Psoas muscle (tissue), 8 donors: ENCODE measurements at regions of chr16 and their contacts with region 1.

Region 1: DNA sequence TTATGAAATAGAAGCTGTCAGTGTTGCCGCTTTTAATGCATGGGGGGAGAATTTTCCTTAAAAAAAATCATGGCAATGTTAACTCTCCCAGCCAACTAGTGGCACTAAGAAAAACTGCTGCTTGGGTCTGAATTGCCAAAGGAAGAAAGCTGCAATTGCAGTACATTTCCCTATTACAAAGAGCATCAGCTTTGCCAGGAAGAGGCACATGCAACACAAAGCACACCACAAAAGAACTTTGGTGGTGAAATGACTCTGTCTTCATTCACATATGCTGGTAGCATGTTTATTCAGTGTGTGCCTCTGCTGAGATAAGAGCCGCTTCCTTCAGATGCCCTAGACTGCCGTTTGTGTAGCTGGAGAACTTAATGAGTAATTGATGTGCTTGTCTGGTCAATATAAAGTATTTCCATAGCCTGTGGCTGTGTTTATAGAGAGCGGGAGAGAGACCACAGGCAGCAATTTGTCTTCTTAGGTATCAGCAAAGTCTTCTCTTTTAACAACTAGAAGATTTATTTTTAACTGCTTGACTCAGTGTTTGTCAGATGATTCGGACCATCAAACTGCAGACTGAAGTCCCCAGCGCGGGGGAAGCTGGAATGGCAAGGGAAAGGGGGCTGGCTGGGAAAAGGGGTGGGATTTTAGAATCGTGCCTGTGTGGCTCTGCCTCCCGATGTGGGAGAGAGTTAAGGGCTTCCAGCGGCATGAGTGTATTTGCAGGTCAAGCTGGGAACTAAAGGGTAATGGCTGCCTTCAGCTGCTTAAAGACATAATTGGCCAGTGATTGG is 115.1 kb downstream of the MRTFB start:
- DNase-seq: peak; percentile 24 to 53
- ATAC-seq: peak; percentile 74 to 87 (median 82)
- H3K4me3 ChIP-seq: peak overlapping the region; percentile 72
- H3K27ac ChIP-seq: peak overlapping the region; percentile 90
- H3K4me1 ChIP-seq: peaks cover 34% of the 10 kb centered on the region
- H3K27me3 ChIP-seq: no peaks in the 10 kb centered on the region
- CTCF ChIP-seq: peak; percentile 45

Region 2: GRCh38 chr16:13262270-13263090 is 923.7 kb before region 1 on chr16:
- intact Hi-C with region 1: no loop called
- DNase-seq: no peak
- ATAC-seq: no peak
- H3K4me3 ChIP-seq: no peak overlapping the region
- H3K27ac ChIP-seq: no peak overlapping the region
- H3K4me1 ChIP-seq: no peaks in the 10 kb centered on the region
- H3K27me3 ChIP-seq: peaks cover 0 to 2% (median 0%) of the 10 kb centered on the region in 3 donors
- CTCF ChIP-seq: no peak

Region 3: GRCh38 chr16:13848795-13849194 is 337.4 kb before region 1 on chr16:
- intact Hi-C with region 1: no loop called
- DNase-seq: no peak
- ATAC-seq: no peak
- H3K4me3 ChIP-seq: no peak overlapping the region
- H3K27ac ChIP-seq: no peak overlapping the region
- H3K4me1 ChIP-seq: no peaks in the 10 kb centered on the region
- H3K27me3 ChIP-seq: no peaks in the 10 kb centered on the region
- CTCF ChIP-seq: no peak

Region 4: GRCh38 chr16:13919683-13920509 is 266.3 kb before region 1 on chr16 and contains the start of gene ERCC4:
- intact Hi-C with region 1: loop called (anchors 5 kb)
- DNase-seq: peak; percentile 100
- ATAC-seq: peak; percentile 96 to 99 (median 98)
- H3K4me3 ChIP-seq: peak within 1 kb of the TSS; percentile 96
- H3K27ac ChIP-seq: peak within 1 kb of the TSS; percentile 90
- H3K4me1 ChIP-seq: peaks cover 25% of the 10 kb centered on the region
- H3K27me3 ChIP-seq: no peaks in the 10 kb centered on the region
- CTCF ChIP-seq: peak; percentile 85
- total RNA-seq, gene ERCC4: 6.8 to 10.8 (median 8.8) TPM

Region 5: GRCh38 chr16:14013571-14014282 is 172.5 kb before region 1 on chr16:
- intact Hi-C with region 1: loop called in 1 of 2 experiments (anchors 2 kb)
- DNase-seq: peak in 1 of 2 donors; percentile 60
- ATAC-seq: peak; percentile 60 to 75 (median 66)
- H3K4me3 ChIP-seq: peak overlapping the region; percentile 39
- H3K27ac ChIP-seq: peak overlapping the region; percentile 77
- H3K4me1 ChIP-seq: peaks cover 41% of the 10 kb centered on the region
- H3K27me3 ChIP-seq: no peaks in the 10 kb centered on the region
- CTCF ChIP-seq: no peak

Region 6: GRCh38 chr16:14028202-14028601 is 158.0 kb before region 1 on chr16:
- intact Hi-C with region 1: loop called in 1 of 2 experiments (anchors 5 kb)
- DNase-seq: no peak
- ATAC-seq: peak; percentile 59 to 93 (median 80)
- H3K4me3 ChIP-seq: no peak overlapping the region
- H3K27ac ChIP-seq: peak overlapping the region; percentile 70
- H3K4me1 ChIP-seq: peaks cover 35% of the 10 kb centered on the region
- H3K27me3 ChIP-seq: no peaks in the 10 kb centered on the region
- CTCF ChIP-seq: no peak

Region 7: GRCh38 chr16:14070877-14071575 is 115.2 kb before region 1 on chr16 and contains the start of gene MRTFB:
- intact Hi-C with region 1: loop called (anchors 5 to 10 kb)
- DNase-seq: peak; percentile 83 to 88
- ATAC-seq: peak; percentile 88 to 95 (median 92)
- H3K4me3 ChIP-seq: peak within 1 kb of the TSS; percentile 79
- H3K27ac ChIP-seq: peak within 1 kb of the TSS; percentile 79
- H3K4me1 ChIP-seq: peaks cover 7% of the 10 kb centered on the region
- H3K27me3 ChIP-seq: no peaks in the 10 kb centered on the region
- CTCF ChIP-seq: no peak
- total RNA-seq, gene MRTFB: 14.1 to 26.3 (median 20.0) TPM

Region 8: DNA sequence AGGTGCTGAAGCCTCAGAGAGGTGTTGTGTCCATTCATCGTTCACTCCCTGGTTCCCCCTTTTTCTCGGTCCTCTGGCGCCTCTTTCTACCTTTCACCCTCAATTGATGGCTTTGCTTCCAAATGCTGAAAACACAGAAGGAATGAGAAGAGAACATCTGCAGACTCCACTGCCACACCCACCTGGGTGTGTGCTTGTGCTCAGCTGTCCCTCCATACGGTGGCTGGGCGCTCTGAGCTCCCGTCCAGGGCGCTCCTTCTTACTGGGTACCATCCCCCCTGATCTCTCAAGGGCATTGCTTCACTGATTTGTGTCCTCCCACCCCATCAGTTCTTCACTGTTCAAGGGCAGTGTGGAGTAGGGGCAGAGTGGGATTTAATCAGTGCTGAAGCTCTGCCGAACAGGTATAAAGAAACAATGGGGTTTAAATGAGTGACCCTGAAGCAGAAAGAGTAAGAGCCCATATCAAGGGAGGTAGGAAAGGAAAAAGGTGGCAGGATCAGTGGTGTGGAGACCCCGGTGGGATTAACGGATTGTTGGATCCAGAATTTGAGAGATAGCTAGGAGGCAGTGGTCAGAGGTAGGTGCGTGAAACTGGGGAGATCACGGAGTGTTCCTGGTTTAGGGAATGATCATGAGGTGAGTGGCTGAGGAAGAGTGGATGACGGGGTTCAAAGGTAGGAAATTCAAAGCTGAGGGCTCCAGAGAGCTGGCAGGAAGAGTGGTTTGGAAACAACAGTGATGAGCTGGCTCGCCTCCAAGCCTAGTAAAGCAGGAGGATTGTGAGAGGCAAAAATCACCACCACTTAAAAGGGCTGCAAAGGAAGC is 74.3 kb before region 1 on chr16:
- intact Hi-C with region 1: loop called in 1 of 2 experiments (anchors 5 kb)
- DNase-seq: peak; percentile 43 to 58
- ATAC-seq: peak in 3 of 4 donors; percentile 2 to 26 (median 7)
- H3K4me3 ChIP-seq: no peak overlapping the region
- H3K27ac ChIP-seq: peak overlapping the region; percentile 76
- H3K4me1 ChIP-seq: peaks cover 78% of the 10 kb centered on the region
- H3K27me3 ChIP-seq: no peaks in the 10 kb centered on the region
- CTCF ChIP-seq: no peak

Region 9: DNA sequence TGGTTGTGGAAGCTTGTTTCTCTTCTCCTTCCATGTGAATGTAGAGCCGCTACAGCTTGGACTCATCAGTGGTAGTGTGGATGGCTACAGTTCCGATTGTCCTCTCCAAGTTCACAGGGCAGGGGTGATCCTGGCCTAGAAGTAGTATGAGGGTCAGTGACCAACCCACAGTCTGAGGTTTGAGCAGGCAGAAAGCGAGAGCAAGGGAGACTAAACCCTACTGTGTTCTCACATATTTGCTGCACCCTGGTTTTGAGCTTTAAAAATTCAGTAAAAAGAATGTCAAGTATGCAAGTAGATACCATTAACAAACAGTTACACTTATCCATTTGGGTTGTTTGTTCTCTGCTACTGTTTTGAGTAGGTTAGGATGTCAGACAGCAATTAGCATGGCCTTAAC is 33.8 kb after region 1 on chr16:
- intact Hi-C with region 1: no loop called
- DNase-seq: no peak
- ATAC-seq: no peak
- H3K4me3 ChIP-seq: no peak overlapping the region
- H3K27ac ChIP-seq: no peak overlapping the region
- H3K4me1 ChIP-seq: no peaks in the 10 kb centered on the region
- H3K27me3 ChIP-seq: no peaks in the 10 kb centered on the region
- CTCF ChIP-seq: no peak

Region 10: DNA sequence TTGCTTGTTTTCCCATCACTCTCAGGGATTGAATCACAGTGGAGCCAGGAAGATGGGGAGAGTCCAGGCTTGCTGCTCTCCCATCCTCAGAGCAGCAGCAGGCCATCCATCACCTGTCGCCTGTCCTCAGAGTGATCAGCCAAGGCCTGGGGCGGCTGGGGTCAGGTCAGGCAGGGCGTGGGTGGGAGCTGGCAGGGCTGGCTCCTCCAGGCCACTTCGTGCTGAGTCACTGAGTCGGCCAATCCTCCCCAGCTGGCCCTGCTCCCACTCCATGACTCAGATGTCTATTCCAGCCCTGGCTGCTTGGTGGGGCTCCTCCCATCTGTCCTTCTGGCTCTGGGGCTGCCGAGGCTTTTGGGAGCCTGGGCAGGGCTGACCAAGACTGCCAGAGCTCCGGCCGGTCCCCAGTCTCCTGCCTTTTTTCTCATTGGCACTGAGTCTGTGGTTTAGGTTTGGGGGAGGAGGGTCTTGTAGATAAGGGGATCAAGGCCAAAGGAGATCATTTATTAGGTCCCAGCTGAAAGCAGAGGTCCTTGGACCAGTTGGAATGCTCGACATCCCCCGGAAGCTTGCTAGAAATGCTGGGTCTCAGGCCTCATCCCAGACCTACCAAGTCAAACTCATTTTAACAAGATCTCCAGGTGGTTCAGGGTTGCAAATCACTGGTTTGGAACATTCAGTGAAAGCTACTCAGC is 1835.9 kb after region 1 on chr16:
- intact Hi-C with region 1: no loop called
- DNase-seq: peak; percentile 99
- ATAC-seq: peak; percentile 97 to 99 (median 98)
- H3K4me3 ChIP-seq: peak overlapping the region; percentile 35
- H3K27ac ChIP-seq: peak overlapping the region; percentile 84
- H3K4me1 ChIP-seq: peaks cover 45% of the 10 kb centered on the region
- H3K27me3 ChIP-seq: no peaks in the 10 kb centered on the region
- CTCF ChIP-seq: no peak